Panc1 (cell line): ENCODE measurements at regions of chr2 and their contacts with region 1.

Region 1: GRCh38 chr2:100818606-100819369 is 1.2 kb upstream of the NPAS2 start:
- DNase-seq: no peak
- ATAC-seq: peak; percentile 67
- H3K4me3 ChIP-seq: peak overlapping the region; percentile 74 to 77
- H3K27ac ChIP-seq: peak overlapping the region; percentile 77
- H3K4me1 ChIP-seq: peaks cover 26% of the 10 kb centered on the region
- H3K27me3 ChIP-seq: no peaks in the 10 kb centered on the region
- CTCF ChIP-seq: peak; percentile 77

Region 2: GRCh38 chr2:100544911-100545596 is 273.7 kb before region 1 on chr2:
- CTCF ChIA-PET with region 1: no interaction called
- POLR2A ChIA-PET with region 1: no interaction called
- in situ Hi-C with region 1: no loop called
- intact Hi-C with region 1: no loop called
- DNase-seq: no peak
- ATAC-seq: no peak
- H3K4me3 ChIP-seq: no peak overlapping the region
- H3K27ac ChIP-seq: no peak overlapping the region
- H3K4me1 ChIP-seq: no peaks in the 10 kb centered on the region
- H3K27me3 ChIP-seq: no peaks in the 10 kb centered on the region; the same call in 1 of the 2 replicates
- CTCF ChIP-seq: no peak

Region 3: GRCh38 chr2:100610381-100610831 is 208.4 kb before region 1 on chr2:
- CTCF ChIA-PET with region 1: no interaction called
- POLR2A ChIA-PET with region 1: no interaction called
- in situ Hi-C with region 1: no loop called
- intact Hi-C with region 1: loop called (anchors 5 kb)
- DNase-seq: peak; percentile 38
- ATAC-seq: peak; percentile 84
- H3K4me3 ChIP-seq: no peak overlapping the region
- H3K27ac ChIP-seq: no peak overlapping the region
- H3K4me1 ChIP-seq: peaks cover 7% of the 10 kb centered on the region
- H3K27me3 ChIP-seq: no peaks in the 10 kb centered on the region
- CTCF ChIP-seq: peak; percentile 87

Region 4: GRCh38 chr2:100730346-100730745 is 88.4 kb before region 1 on chr2:
- CTCF ChIA-PET with region 1: no interaction called
- POLR2A ChIA-PET with region 1: no interaction called
- in situ Hi-C with region 1: no loop called
- intact Hi-C with region 1: loop called (anchors 5 kb)
- DNase-seq: no peak
- ATAC-seq: peak; percentile 92
- H3K4me3 ChIP-seq: no peak overlapping the region
- H3K27ac ChIP-seq: no peak overlapping the region
- H3K4me1 ChIP-seq: peaks cover 10% of the 10 kb centered on the region
- H3K27me3 ChIP-seq: no peaks in the 10 kb centered on the region
- CTCF ChIP-seq: peak; percentile 84

Region 5: DNA sequence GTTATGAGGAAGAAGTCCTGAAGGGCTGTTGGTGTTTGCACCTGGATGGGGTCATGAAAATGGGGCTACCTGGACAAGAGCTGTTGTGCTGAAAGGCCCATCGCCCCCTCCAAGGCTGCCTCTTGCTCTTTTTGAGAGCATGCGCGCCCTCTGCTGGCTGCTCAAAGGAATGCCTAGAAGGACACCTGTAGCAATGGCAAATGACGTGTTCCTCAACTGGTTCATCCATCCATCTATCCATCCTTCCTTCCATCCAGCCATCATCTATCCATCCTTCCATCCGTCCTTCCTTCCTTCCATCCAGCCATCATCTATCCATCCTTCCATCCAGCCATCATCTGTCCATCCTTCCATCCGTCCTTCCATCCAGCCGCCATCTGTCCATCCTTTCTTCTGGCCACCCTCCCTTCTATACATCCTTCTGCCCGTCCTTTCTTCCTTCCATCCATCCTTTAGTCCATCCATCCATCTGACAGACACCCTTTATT is 166.1 kb after region 1 on chr2:
- CTCF ChIA-PET with region 1: no interaction called
- POLR2A ChIA-PET with region 1: interaction called, 6 read pairs
- in situ Hi-C with region 1: no loop called
- intact Hi-C with region 1: loop called (anchors 5 kb)
- DNase-seq: no peak
- ATAC-seq: peak; percentile 82
- H3K4me3 ChIP-seq: no peak overlapping the region
- H3K27ac ChIP-seq: no peak overlapping the region
- H3K4me1 ChIP-seq: peaks cover 11% of the 10 kb centered on the region
- H3K27me3 ChIP-seq: no peaks in the 10 kb centered on the region
- CTCF ChIP-seq: peak; percentile 93